WTC11 (cell line): ENCODE measurements at regions of chr9 and their contacts with region 1.

Region 1: DNA sequence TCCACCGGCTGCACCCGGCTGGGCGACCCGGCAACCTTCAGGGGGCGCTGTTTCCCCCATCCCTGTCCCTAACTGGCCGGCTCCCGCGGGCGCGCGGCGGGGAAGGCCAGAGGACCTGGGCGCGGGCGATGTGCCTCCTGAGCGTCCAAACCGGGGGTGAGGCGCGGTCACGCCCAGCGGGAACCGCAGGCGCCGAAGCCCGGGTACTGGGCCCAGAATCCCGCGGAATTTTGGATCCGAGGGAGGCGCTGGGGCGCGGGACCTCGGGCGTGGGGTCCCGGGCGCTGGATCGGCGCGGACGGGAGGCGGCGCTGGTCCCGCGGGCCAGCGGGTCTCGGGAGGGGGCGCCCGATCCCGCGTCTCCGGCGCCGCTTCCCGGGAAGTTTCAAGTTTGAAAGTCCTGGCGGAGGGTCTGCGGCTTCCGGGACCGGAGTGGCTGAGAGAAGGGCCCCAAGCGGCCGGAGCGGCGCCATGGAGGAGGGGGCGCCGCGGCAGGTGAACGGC is at the start of gene PKN3:
- DNase-seq: peak; percentile 97
- ATAC-seq: peak; percentile 81
- H3K4me3 Mint-ChIP-seq: peak within 1 kb of the TSS; percentile 83
- H3K27ac Mint-ChIP-seq: peak within 1 kb of the TSS; percentile 89
- H3K4me1 Mint-ChIP-seq: peaks cover 4% of the 10 kb centered on the region; the same call in 1 of the 2 replicates
- H3K27me3 Mint-ChIP-seq: no peaks in the 10 kb centered on the region
- CTCF ChIP-seq: peak; percentile 96
- total RNA-seq, gene PKN3: 24.1 to 28.9 TPM (median 27.5 TPM) in 3 replicates

Region 2: DNA sequence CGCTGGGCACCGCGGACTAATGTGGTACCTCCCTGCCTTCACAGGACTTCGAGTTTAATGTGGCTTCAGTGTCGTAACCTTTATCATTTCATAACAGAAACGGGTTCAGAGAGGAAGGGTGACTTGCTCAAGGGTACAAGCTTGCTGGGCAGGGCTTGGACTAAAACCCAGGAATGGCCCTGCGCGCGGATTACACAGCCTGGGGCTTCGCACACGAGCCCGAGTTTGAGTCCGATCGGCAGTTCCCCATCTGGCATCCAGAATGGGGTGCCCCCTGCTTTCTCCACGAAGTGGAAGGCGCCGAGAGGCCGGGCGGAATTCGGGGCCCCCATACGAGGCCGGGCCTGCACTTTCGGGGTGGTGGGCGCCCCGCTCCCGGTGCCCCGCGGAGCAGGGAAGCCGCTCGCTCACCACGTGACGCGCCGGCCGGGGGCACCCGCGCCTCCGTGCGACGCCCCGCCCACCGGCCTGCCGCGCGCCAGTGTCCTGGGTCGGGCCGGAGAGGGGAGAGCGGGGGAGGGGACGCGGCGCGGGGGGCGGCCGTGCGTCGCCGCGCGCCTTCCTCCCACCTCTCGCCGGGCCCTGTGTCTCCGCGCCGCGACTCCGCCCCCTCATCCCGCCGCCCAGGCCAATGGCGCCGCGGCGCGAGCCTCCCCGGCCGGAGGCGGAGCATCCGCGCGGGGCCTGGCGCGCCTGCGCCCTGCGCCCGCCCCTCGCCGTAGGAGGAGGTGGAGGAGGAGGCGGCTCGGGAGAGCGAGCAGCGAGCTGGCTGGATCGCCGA is 13.8 kb before region 1 on chr9 and contains the start of gene SET:
- CTCF ChIA-PET with region 1: interaction called, 14 read pairs
- POLR2A ChIA-PET with region 1: interaction called, 6 read pairs
- DNase-seq: peak; percentile 93
- ATAC-seq: peak; percentile 84
- H3K4me3 Mint-ChIP-seq: peak within 1 kb of the TSS; percentile 96
- H3K27ac Mint-ChIP-seq: peak within 1 kb of the TSS; percentile 98
- H3K4me1 Mint-ChIP-seq: peaks cover 57% of the 10 kb centered on the region
- H3K27me3 Mint-ChIP-seq: no peaks in the 10 kb centered on the region; the same call in 1 of the 2 replicates
- CTCF ChIP-seq: no peak
- total RNA-seq, gene SET: 1,083 to 1,129 TPM (median 1,086 TPM) in 3 replicates

Region 3: DNA sequence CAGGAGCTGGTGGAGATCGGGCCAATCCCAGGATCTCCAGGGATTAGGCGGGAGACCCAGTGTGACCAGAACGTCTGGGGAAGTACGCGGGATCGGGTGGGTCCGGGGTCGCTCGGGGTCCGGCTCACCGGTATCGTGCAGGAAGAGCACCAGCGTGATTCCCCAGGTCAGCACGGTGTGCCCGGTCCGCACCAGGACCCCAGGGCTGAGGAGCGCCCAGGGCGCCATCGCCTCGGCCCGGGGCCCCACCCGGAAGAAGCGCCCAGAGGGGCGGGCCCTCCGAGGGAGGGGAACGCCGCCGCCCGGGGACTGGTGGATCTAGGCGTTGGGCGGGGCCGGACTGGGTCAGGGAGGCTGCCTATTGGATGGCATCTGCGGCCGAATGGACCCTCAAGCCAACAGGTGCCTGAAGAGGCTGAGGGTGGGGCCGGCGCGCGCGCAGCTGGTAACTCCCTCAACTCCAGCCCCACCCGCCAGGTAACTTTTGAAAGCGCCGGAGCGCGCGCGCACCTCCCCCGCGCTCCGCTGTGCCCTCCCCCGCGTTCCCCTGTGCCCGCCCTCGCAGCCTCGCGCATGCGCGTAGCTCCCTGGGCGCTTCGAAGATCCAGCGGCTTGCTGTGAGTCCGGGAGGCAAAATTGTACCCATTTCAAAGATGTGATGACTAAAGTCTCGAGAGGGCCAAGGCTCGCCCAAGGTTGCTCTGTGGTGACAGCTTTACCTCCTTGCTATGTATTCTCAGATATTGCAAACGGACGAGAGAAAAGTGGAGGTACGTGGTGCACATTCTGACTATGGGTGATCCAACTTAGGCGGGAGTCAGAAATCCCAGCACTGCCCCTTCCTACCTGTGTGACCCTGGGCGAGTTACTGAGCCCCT is 21.6 kb after region 1 on chr9 and contains the start of gene ZDHHC12:
- CTCF ChIA-PET with region 1: interaction called, 23 read pairs
- POLR2A ChIA-PET with region 1: interaction called, 7 read pairs
- DNase-seq: peak; percentile 99
- ATAC-seq: peak; percentile 93
- H3K4me3 Mint-ChIP-seq: peak within 1 kb of the TSS; percentile 96
- H3K27ac Mint-ChIP-seq: peak within 1 kb of the TSS; percentile 97
- H3K4me1 Mint-ChIP-seq: peaks cover 15% of the 10 kb centered on the region
- H3K27me3 Mint-ChIP-seq: no peaks in the 10 kb centered on the region
- CTCF ChIP-seq: no peak
- total RNA-seq, gene ZDHHC12: 39.7 to 46.3 TPM (median 45.2 TPM) in 3 replicates

Region 4: GRCh38 chr9:128969491-128969890 is 267.0 kb after region 1 on chr9:
- CTCF ChIA-PET with region 1: no interaction called
- POLR2A ChIA-PET with region 1: no interaction called
- DNase-seq: no peak
- ATAC-seq: no peak
- H3K4me3 Mint-ChIP-seq: no peak overlapping the region
- H3K27ac Mint-ChIP-seq: no peak overlapping the region
- H3K4me1 Mint-ChIP-seq: no peaks in the 10 kb centered on the region
- H3K27me3 Mint-ChIP-seq: no peaks in the 10 kb centered on the region
- CTCF ChIP-seq: no peak